Spleen (tissue), 13 donors: ENCODE measurements at regions of chr7 and their contacts with region 1.

Region 1: DNA sequence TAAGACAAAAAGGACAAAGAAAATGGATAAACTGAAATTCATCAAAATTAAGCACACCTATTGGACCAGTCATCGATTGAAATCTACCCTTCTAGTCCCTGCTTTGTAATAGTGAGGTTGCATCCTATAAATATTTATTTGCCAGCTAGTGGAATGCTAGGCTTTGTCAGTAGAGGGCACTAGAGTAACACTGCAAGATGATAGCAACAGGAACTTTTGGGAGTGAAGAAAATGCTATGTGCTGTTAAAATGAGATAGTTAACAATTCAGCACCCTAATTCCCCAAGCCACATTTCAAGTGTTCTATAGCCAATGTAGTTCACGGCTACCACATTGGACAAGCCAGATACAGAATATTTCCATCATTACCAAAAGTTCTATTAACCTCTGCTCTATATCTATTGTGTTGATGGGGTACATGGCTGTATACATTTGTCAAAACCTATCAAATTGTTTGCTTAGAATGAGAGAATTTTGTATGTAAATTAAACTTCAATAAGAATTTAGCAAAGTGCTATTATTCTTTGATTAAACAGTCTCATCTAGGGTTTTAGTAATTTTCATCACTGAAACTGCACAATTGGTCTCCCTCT is 69.8 kb downstream of the LSMEM1 start:
- DNase-seq: no peak
- H3K4me3 ChIP-seq: no peak overlapping the region
- H3K27ac ChIP-seq: no peak overlapping the region
- H3K4me1 ChIP-seq: no peaks in the 10 kb centered on the region
- H3K27me3 ChIP-seq: peaks cover 0 to 22% (median 0%) of the 10 kb centered on the region in 7 donors
- CTCF ChIP-seq: peak; percentile 55 to 88 (median 78)
- POLR2A ChIP-seq: no peak

Region 2: GRCh38 chr7:112898432-112899290 is 348.1 kb after region 1 on chr7:
- intact Hi-C with region 1: loop called (anchors 10 kb)
- DNase-seq: no peak
- H3K4me3 ChIP-seq: no peak overlapping the region
- H3K27ac ChIP-seq: peak overlapping the region in 1 of 8 donors; percentile 26
- H3K4me1 ChIP-seq: no peaks in the 10 kb centered on the region
- H3K27me3 ChIP-seq: no peaks in the 10 kb centered on the region
- CTCF ChIP-seq: peak; percentile 38 to 80 (median 63)
- POLR2A ChIP-seq: no peak

Region 3: GRCh38 chr7:113421696-113422330 is 871.2 kb after region 1 on chr7:
- intact Hi-C with region 1: loop called (anchors 5 kb)
- DNase-seq: peak; percentile 80
- H3K4me3 ChIP-seq: no peak overlapping the region
- H3K27ac ChIP-seq: no peak overlapping the region
- H3K4me1 ChIP-seq: peaks cover 0 to 6% (median 0%) of the 10 kb centered on the region in 6 donors
- H3K27me3 ChIP-seq: no peaks in the 10 kb centered on the region
- CTCF ChIP-seq: peak; percentile 37 to 84 (median 70)
- POLR2A ChIP-seq: no peak